ENCODE measurements at regions of chr10 and their contacts with region 1.

Region 1: GRCh38 chr10:110425684-110426293 is 71.9 kb upstream of the DUSP5 start:
- DNase-seq: peak; percentile 91
- ATAC-seq: peak; percentile 89
- H3K4me3 Mint-ChIP-seq: peak overlapping the region; percentile 0
- H3K27ac Mint-ChIP-seq: peak overlapping the region; percentile 81
- H3K4me1 Mint-ChIP-seq: peaks cover 50% of the 10 kb centered on the region
- H3K27me3 Mint-ChIP-seq: no peaks in the 10 kb centered on the region
- CTCF ChIP-seq: no peak

Region 2: DNA sequence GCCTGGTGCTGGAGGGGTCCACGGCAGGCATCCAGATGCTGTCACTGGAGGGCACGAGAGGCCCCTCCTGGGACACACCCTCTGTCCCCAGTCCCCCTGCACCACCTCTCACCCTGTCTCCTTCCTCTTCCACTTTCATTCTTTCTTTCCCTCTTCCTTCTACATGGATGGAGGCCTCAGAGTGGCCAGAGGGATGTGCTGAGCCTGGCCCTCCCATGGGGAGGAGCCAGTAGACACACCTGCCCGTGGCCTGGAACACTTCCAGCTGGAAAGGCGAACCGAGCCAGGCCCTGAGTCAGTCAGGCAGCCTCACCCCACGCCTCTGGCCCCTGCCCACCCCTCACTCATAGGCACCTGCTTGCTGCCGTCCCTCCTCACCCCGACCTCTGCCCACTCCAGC is 274.3 kb before region 1 on chr10:
- CTCF ChIA-PET with region 1: no interaction called
- POLR2A ChIA-PET with region 1: no interaction called
- intact Hi-C with region 1: no loop called
- DNase-seq: no peak
- ATAC-seq: no peak
- H3K4me3 Mint-ChIP-seq: no peak overlapping the region
- H3K27ac Mint-ChIP-seq: no peak overlapping the region
- H3K4me1 Mint-ChIP-seq: peaks cover 9% of the 10 kb centered on the region
- H3K27me3 Mint-ChIP-seq: peaks cover 67% of the 10 kb centered on the region
- CTCF ChIP-seq: no peak

Region 3: DNA sequence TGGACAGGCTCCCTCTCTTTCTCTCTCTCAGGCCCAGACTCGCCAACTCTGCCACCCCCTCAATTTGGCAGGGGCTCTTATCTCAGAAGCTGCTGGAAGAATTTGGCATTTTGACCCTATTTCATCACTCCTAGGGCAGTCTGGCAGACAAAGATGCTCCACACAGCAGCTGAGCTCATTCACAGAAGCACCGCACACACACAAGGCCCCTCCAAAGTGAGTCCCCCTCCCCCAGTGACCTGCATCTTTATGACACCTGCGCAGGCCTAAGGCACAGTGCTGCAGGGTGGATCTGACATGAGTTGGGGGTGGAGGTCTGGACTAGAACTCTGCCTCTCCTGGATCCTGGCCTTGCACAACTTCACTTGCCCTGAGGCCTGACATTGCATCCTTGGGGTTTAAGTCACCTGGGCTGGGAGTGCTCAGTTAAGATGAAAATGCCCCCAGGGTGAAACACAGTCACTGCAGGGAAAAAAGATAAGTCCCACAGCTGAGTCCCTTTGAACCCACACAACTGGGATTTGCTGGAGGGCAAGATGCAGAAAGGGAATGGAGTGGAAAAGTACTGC is 30.8 kb after region 1 on chr10:
- CTCF ChIA-PET with region 1: no interaction called
- POLR2A ChIA-PET with region 1: no interaction called
- intact Hi-C with region 1: no loop called
- DNase-seq: no peak
- ATAC-seq: no peak
- H3K4me3 Mint-ChIP-seq: no peak overlapping the region
- H3K27ac Mint-ChIP-seq: no peak overlapping the region
- H3K4me1 Mint-ChIP-seq: peaks cover 40% of the 10 kb centered on the region
- H3K27me3 Mint-ChIP-seq: no peaks in the 10 kb centered on the region
- CTCF ChIP-seq: no peak

Region 4: DNA sequence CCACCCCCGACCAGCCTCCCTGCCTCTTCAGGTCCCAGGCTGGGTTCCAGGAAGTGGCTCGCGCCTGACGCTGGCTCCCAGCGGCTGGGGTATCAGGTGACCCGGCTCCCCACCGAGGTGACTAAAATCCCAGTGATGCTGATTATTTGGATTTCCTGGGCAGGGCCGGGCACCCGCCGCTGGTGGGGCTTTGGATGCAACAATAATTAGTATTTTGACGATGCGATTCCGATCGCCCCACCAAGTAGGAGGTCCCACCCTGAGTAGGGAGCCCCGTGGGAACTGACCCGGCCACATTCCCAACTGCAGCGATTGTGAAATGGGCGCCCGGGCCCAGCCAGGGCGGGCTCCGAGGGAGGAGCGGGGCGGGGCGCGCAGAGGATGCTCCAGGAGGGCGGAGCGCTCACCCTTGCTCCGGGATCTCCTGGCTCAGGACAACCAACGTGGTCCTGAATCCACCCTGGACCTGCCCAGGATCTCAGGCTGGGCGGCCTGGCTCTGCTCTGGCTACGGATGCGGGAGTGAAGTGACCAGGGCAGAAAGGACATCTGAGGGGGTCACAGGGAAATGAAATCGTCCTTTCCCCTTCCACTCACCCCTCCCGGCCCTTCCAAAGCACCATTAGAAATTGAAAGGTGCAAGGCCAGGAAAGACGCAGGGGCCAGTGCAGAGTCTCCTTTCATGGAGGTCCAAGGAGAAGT is 104.5 kb after region 1 on chr10:
- CTCF ChIA-PET with region 1: no interaction called
- POLR2A ChIA-PET with region 1: no interaction called
- intact Hi-C with region 1: loop called (anchors 1 kb)
- DNase-seq: peak; percentile 29
- ATAC-seq: no peak
- H3K4me3 Mint-ChIP-seq: no peak overlapping the region
- H3K27ac Mint-ChIP-seq: no peak overlapping the region
- H3K4me1 Mint-ChIP-seq: peaks cover 65% of the 10 kb centered on the region
- H3K27me3 Mint-ChIP-seq: no peaks in the 10 kb centered on the region
- CTCF ChIP-seq: no peak